ENCODE measurements at regions of chr12 and their contacts with region 1.

Region 1: DNA sequence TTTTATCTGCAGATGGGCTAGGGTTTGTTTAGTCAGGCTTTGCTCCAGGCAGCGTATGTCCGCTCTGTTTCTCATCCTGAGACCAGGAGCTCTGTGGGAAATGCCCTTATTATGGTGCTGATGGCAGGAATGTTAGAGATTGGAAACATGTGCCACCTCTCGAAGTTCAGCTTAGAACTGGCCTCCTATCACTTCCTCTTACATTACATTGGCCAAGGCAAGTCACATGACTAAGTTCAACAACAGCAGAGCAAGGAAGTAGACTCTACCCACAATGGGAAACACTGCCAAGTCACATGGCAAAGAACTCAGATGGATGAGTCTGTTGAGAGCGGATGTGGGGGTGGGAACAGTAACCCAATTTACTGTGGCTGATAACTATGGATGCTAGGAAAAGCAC is 161.9 kb upstream of the WSCD2 start:
- DNase-seq: peak in 1 of 2 experiments; percentile 14
- ATAC-seq: no peak; a peak in 1 of 6 replicates
- H3K4me3 ChIP-seq: no peak overlapping the region
- H3K27ac ChIP-seq: no peak overlapping the region
- H3K4me1 ChIP-seq: no peaks in the 10 kb centered on the region
- CTCF ChIP-seq: no peak
- EP300 ChIP-seq: no peak
- POLR2A ChIP-seq: no peak
- RAD21 ChIP-seq: no peak

Region 2: DNA sequence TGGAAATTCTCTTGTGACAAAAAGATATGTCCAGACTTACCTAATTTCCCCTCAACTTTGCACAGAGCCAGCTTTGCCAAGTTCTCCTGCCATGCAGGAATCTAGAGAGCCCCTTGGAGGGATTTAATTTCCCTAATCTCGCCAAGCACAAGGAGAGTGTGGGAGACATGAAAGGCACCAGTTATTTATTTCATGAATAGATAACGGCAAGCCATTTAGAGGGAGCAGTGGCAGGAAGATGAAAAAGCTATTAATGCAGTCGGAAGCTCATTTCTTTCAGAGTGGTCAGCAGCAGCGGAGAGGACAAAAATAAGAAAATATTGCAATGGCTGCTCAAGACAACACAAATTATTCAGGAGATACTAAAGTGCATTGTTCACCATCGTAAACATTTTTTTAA is 11.0 kb after region 1 on chr12:
- CTCF ChIA-PET with region 1: interaction called, 13 read pairs
- POLR2A ChIA-PET with region 1: no interaction called
- DNase-seq: no peak
- ATAC-seq: no peak
- H3K4me3 ChIP-seq: no peak overlapping the region
- H3K27ac ChIP-seq: no peak overlapping the region
- H3K4me1 ChIP-seq: no peaks in the 10 kb centered on the region
- CTCF ChIP-seq: no peak
- EP300 ChIP-seq: no peak
- POLR2A ChIP-seq: no peak
- RAD21 ChIP-seq: no peak

Measured in A549 (cell line).